Dendritic cell treated with granulocyte-macrophage colony-stimulating factor and Interleukin-4, amounts not matched to agents 40 ng/mL and 50 ng/mL, for 4 days (primary cell): ENCODE measurements at regions of chr7 and their contacts with region 1.

Region 1: DNA sequence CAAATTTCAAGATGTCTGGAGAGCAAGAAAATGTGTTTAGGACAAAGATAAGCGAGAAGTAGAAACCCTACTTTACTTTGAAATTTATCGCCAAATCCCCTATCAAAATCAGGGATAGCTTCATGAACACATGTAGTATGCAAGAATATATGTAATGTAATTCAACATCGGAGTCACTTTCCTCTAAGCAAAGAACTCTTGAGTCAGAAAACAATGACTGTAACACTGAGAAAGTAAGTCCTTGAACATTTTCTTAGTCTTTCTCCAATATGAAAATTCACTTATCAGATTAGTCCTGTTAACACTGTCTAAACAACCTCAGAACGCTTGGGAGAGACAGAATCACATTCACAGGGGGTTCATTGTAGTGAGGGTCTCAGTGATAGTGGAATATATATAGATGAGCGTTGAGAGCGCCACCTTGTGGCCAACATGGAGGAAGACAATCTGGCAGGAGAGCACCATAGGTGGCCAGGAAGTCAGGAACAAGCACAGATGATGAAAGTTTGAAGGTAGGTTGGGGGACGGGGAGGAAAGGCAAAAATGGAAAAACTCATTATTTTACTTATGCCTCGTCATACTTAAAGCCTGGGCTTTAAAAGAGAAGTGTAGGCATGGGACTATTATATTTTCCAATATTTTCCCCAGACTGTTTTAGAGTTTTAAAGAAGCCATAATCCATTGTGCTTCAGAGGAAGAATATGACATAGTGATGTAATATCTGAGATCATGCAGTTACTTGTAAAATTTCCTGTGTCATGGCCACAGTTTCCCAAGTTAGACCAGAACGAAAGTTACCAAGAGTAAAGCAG is 115.5 kb upstream of the GNAI1 start:
- H3K4me3 Mint-ChIP-seq: no peak overlapping the region
- H3K27ac Mint-ChIP-seq: no peak overlapping the region
- H3K4me1 Mint-ChIP-seq: no peaks in the 10 kb centered on the region
- H3K27me3 Mint-ChIP-seq: no peaks in the 10 kb centered on the region

Region 2: GRCh38 chr7:78020136-78020873 is 1998.8 kb before region 1 on chr7:
- intact Hi-C with region 1: loop called (anchors 2 kb)
- H3K4me3 Mint-ChIP-seq: peak overlapping the region; percentile 80
- H3K27ac Mint-ChIP-seq: peak overlapping the region; percentile 83
- H3K4me1 Mint-ChIP-seq: peaks cover 27% of the 10 kb centered on the region
- H3K27me3 Mint-ChIP-seq: peaks cover 13% of the 10 kb centered on the region

Region 3: DNA sequence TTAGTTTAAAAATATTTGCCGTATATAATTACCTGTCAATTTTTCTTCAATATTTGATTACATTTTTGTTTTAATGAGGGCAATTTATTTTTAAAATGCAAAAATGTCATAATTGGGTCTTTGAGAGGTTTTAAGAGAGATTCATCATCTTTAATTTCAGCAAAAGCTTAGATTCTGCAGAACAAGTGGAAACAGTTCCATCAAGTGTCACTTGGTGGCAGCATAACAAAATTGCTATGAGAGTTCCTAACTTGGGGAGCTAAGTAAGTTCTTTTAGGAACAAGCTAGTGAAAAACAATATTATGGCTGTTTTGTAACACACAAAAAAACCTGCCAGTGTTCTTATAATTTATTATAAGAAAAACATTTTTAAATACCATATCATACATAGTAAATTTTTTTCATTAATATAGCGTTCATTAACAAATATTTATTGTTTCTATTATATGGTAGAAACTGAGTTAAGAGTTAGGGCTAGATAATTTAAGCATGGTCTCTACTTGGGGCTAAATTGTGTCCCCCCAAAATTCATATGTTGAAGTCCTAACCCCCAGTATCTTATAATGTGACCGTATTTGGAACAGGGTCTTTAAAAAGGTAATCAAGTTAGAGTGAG is 720.9 kb before region 1 on chr7:
- intact Hi-C with region 1: loop called (anchors 2 kb)
- H3K4me3 Mint-ChIP-seq: no peak overlapping the region
- H3K27ac Mint-ChIP-seq: no peak overlapping the region
- H3K4me1 Mint-ChIP-seq: no peaks in the 10 kb centered on the region
- H3K27me3 Mint-ChIP-seq: no peaks in the 10 kb centered on the region